Esophagus squamous epithelium (tissue), 5 donors: ENCODE measurements at regions of chr4 and their contacts with region 1.

Region 1: GRCh38 chr4:127965062-127965802 is at the starts of genes ABHD18 and MFSD8:
- DNase-seq: peak; percentile 95
- H3K4me3 ChIP-seq: peak within 1 kb of the TSS; percentile 77 to 96 (median 90)
- H3K27ac ChIP-seq: peak within 1 kb of the TSS; percentile 94 to 98 (median 96)
- H3K4me1 ChIP-seq: peaks cover 6 to 44% (median 8%) of the 10 kb centered on the region in 3 donors
- H3K27me3 ChIP-seq: no peaks in the 10 kb centered on the region
- CTCF ChIP-seq: peak; percentile 14 to 61 (median 42)
- POLR2A ChIP-seq: peak in 3 of 4 donors; percentile 50 to 76 (median 60)
- total RNA-seq, gene ABHD18: 3.2 to 9.3 (median 4.9) TPM
- total RNA-seq, gene MFSD8: 14.6 to 36.6 (median 17.0) TPM

Region 2: GRCh38 chr4:127656047-127656680 is 309.1 kb before region 1 on chr4:
- intact Hi-C with region 1: no loop called
- DNase-seq: no peak
- H3K4me3 ChIP-seq: no peak overlapping the region
- H3K27ac ChIP-seq: no peak overlapping the region
- H3K4me1 ChIP-seq: no peaks in the 10 kb centered on the region
- H3K27me3 ChIP-seq: no peaks in the 10 kb centered on the region
- CTCF ChIP-seq: no peak
- POLR2A ChIP-seq: no peak

Region 3: DNA sequence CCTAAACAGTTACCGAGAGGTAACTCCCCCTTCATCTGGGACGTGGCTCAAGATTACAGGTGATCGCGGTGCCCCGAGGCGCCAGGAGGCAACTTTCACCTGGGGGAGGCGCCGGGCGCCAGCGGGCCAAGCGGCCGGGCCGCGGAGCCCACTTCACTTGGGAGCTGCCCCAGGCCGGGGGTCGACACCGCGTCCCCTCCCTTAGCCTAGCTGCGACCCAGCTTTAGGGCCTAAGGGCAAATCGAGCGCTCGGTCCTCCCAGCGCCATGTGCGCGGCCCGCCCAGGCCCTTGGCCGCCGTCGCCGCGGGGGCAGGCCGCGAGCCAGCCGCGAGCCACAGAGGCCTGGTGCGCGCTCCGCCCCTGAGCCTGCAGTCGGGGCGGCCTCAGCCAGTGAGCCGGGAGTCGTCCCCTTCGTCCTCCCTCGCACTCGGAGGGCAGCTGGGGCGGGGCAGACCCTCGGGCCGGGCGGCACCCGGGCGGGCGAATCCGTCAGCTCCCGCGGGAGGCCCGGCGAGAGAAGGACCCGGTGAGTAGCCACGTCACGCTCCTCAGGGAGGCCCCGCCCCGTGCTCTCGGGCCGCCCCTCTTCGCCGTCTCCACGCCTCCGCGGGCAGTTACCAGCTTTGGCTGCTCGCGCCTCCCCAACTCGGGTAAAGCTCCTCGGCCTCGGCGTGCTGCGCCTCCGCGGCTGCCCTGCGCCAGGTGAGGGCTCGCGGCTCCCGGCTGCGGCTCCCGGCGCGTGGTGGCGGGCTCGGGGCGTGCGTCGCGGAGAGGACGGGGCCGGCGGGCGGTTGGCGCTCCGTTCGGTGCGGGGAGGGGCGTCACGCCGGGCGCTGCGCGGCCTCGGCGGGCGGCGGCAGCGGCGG is 95.7 kb after region 1 on chr4 and contains the start of gene LARP1B:
- intact Hi-C with region 1: loop called (anchors 5 kb)
- DNase-seq: peak; percentile 61
- H3K4me3 ChIP-seq: peak within 1 kb of the TSS; percentile 76 to 94 (median 89)
- H3K27ac ChIP-seq: peak within 1 kb of the TSS; percentile 95 to 99 (median 98)
- H3K4me1 ChIP-seq: peaks cover 5 to 21% (median 7%) of the 10 kb centered on the region in 3 donors
- H3K27me3 ChIP-seq: no peaks in the 10 kb centered on the region
- CTCF ChIP-seq: no peak
- POLR2A ChIP-seq: peak in 3 of 4 donors; percentile 59 to 96 (median 77)
- total RNA-seq, gene LARP1B: 11.5 to 29.2 (median 16.4) TPM

Region 4: DNA sequence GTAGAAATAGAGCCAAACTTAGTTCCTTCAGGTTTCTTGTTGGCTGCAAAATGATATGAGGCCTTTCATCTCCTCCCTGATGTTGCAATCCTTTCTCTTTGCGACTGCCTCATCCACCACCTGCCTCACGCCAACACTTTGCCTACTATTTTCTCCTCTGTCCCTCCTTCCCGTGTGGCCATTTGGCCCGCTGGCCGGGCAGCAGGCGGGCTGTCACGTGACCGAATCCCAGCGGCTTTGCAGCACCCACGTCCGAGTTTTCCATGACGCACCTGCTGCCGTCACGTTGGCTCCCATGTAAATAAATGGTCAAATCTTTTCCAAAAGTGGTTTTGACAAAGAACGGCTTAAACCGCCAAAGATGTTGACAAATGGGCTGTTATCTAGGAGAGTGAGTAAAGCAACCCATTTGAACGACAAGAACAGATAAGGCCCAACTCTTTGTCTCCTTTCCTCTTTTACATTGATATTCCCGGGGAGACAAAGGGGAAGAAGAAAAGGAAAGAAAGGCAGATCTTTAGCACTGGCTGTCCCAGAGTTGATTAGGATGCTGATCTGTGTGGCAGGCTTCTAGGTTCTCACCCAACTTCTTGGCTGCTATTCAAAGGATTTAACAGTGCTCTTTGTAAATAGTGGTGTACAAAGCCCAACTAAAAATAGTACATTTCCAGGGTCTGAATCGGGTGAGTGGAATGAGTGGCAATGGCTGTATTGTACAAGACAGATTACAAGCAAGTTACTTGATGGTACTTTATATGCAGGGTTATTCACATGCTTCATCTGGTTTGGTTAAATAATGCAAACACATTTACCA is 670.1 kb after region 1 on chr4:
- intact Hi-C with region 1: no loop called
- DNase-seq: no peak
- H3K4me3 ChIP-seq: peak overlapping the region in 1 of 4 donors; percentile 19
- H3K27ac ChIP-seq: peak overlapping the region in 1 of 4 donors; percentile 37
- H3K4me1 ChIP-seq: peaks cover 0 to 20% (median 0%) of the 10 kb centered on the region in 3 donors
- H3K27me3 ChIP-seq: no peaks in the 10 kb centered on the region
- CTCF ChIP-seq: no peak
- POLR2A ChIP-seq: no peak